Activated B cell treated with CpG ODN at 0.5 μM for 24 hours (primary cell): ENCODE measurements at regions of chr11 and their contacts with region 1.

Region 1: GRCh38 chr11:65773784-65774411 is 6.9 kb downstream of the AP5B1 start:
- DNase-seq: no peak
- ATAC-seq: no peak
- H3K4me3 Mint-ChIP-seq: no peak overlapping the region
- H3K27ac Mint-ChIP-seq: no peak overlapping the region
- H3K4me1 Mint-ChIP-seq: peaks cover 9% of the 10 kb centered on the region
- H3K27me3 Mint-ChIP-seq: no peaks in the 10 kb centered on the region
- CTCF ChIP-seq: no peak

Region 2: GRCh38 chr11:65700391-65700790 is 73.5 kb before region 1 on chr11:
- CTCF ChIA-PET with region 1: no interaction called
- POLR2A ChIA-PET with region 1: interaction called, 11 read pairs
- intact Hi-C with region 1: no loop called
- DNase-seq: no peak
- ATAC-seq: peak; percentile 75
- H3K4me3 Mint-ChIP-seq: no peak overlapping the region
- H3K27ac Mint-ChIP-seq: no peak overlapping the region
- H3K4me1 Mint-ChIP-seq: peaks cover 8% of the 10 kb centered on the region
- H3K27me3 Mint-ChIP-seq: no peaks in the 10 kb centered on the region
- CTCF ChIP-seq: no peak

Region 3: GRCh38 chr11:65817835-65818742 is 44.2 kb after region 1 on chr11:
- CTCF ChIA-PET with region 1: interaction called, 62 read pairs
- POLR2A ChIA-PET with region 1: interaction called, 26 read pairs
- intact Hi-C with region 1: no loop called
- DNase-seq: peak; percentile 95
- ATAC-seq: peak; percentile 95
- H3K4me3 Mint-ChIP-seq: peak overlapping the region; percentile 77
- H3K27ac Mint-ChIP-seq: peak overlapping the region; percentile 63
- H3K4me1 Mint-ChIP-seq: peaks cover 14% of the 10 kb centered on the region
- H3K27me3 Mint-ChIP-seq: no peaks in the 10 kb centered on the region
- CTCF ChIP-seq: peak; percentile 96